ENCODE measurements at regions of chr15 and their contacts with region 1.

Region 1: DNA sequence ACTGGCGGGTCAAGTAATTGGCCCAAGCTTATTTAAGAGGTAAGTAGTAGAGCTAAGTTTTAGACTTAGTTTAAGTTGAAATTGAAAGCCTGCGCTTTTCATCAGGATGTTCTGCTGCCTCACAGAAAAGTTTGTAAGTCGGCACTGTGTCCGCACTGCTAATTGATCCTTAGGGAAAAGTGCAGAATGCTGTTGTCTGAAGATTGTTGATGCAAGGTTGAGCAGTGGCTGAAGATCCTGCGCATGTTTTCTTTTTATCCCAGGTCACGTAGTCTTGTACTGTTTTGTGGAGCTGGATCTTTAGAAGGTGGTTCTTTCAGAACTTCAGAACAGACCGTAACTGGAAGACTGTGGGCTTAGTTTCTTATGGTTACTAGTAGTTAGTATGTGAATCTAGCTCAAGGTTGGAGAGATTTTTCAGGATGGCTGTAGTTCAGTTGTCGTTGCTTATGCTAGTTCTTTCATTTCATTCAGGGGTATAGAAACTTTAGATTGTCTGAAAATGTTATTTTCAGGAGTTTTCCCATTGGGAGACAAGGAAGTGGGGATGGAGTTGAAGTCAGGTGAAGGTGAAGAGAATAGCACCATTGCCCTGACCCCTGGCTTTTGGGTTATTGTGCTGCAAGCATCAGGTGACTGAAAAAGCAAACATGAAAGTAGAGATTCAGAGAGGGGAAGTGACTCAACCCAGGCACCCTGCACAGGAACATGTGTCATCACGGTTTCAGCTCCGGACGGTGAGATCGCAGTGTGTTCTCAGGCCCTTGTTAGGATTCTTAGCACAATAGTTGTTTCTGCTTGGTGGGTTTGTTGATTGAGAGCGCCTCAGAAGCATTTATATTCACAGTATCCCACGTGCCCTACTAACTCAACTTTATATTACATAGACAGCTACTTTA is 32.8 kb downstream of the AKAP13 start:
- DNase-seq: peak; percentile 86
- ATAC-seq: peak; percentile 93
- H3K4me3 ChIP-seq: peak overlapping the region in 1 of 5 experiments; percentile 9
- H3K4me3 Mint-ChIP-seq: peak overlapping the region; percentile 56
- H3K27ac ChIP-seq: peak overlapping the region; percentile 13 to 72
- H3K27ac Mint-ChIP-seq: peak overlapping the region; percentile 90
- H3K4me1 ChIP-seq: peaks cover 56 to 61% of the 10 kb centered on the region in 2 donors
- H3K4me1 Mint-ChIP-seq: peaks cover 67% of the 10 kb centered on the region
- H3K27me3 ChIP-seq: no peaks in the 10 kb centered on the region
- H3K27me3 Mint-ChIP-seq: no peaks in the 10 kb centered on the region
- CTCF ChIP-seq: peak; percentile 18

Region 2: DNA sequence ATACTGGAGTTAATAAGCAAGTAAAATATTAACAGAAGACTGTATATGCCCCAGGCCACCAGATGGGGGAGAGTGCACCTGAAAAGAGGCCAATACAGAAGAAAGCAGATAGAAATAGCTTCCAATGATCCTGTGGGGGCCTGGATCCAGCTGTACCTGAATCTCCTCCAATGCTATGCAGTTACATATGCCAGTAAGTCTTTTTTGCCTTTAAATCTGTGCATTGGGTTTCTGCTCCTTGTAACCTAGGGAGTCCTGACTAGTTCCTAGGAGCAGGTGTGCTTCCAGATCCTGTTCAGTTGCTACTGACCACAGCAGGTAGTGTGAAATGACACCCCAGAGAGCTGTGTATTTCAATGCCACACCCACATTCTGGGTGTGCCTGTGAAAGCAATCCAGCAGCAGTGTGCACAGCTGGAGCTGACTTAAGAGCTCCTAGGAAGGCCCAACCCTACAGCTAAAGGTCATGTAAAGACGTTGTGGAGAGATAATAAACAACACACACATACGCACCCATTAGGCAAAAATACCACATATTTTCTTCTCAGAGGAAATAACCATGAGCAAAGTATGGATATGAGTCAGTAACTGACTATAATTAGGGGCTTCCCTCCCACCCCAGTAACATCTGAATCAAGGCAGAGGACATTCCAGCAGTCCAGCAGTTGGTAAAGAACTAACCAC is 95.0 kb before region 1 on chr15:
- CTCF ChIA-PET with region 1: interaction called, 40 read pairs
- POLR2A ChIA-PET with region 1: interaction called, 6 read pairs
- intact Hi-C with region 1: no loop called
- DNase-seq: peak; percentile 42
- ATAC-seq: peak; percentile 90
- H3K4me3 ChIP-seq: no peak overlapping the region
- H3K4me3 Mint-ChIP-seq: peak overlapping the region; percentile 46
- H3K27ac ChIP-seq: peak overlapping the region; percentile 20 to 29
- H3K27ac Mint-ChIP-seq: peak overlapping the region; percentile 83
- H3K4me1 ChIP-seq: peaks cover 39 to 40% of the 10 kb centered on the region in 2 donors
- H3K4me1 Mint-ChIP-seq: peaks cover 63% of the 10 kb centered on the region
- H3K27me3 ChIP-seq: no peaks in the 10 kb centered on the region
- H3K27me3 Mint-ChIP-seq: no peaks in the 10 kb centered on the region
- CTCF ChIP-seq: peak; percentile 29

Region 3: GRCh38 chr15:85388566-85389305 is 24.5 kb before region 1 on chr15:
- CTCF ChIA-PET with region 1: interaction called, 89 read pairs
- POLR2A ChIA-PET with region 1: interaction called, 3 read pairs
- intact Hi-C with region 1: no loop called
- DNase-seq: no peak
- ATAC-seq: no peak
- H3K4me3 ChIP-seq: peak overlapping the region in 1 of 5 experiments; percentile 13
- H3K4me3 Mint-ChIP-seq: peak overlapping the region; percentile 73
- H3K27ac ChIP-seq: no peak overlapping the region
- H3K27ac Mint-ChIP-seq: no peak overlapping the region
- H3K4me1 ChIP-seq: peaks cover 57 to 66% of the 10 kb centered on the region in 2 donors
- H3K4me1 Mint-ChIP-seq: peaks cover 33% of the 10 kb centered on the region
- H3K27me3 ChIP-seq: no peaks in the 10 kb centered on the region
- H3K27me3 Mint-ChIP-seq: no peaks in the 10 kb centered on the region
- CTCF ChIP-seq: no peak

Region 4: DNA sequence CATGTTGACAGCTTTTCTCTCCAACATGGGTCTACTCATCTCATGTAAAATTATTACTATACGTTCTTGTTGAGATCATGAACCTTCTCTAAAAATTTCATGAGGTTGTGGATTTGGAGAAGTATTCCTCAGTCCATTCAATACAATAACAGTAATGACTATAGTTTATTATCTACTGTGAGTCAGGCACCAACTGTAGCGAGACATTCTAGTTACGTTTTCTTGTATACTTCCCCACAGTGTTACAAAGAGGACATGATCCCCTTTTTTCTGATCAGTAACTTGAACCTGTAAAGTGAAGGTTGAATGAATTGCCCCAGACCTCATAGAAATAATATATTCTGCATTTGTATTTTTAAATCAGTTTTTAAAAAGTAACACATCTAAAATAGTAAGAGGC is 43.6 kb after region 1 on chr15:
- CTCF ChIA-PET with region 1: interaction called, 4 read pairs
- POLR2A ChIA-PET with region 1: no interaction called
- intact Hi-C with region 1: loop called (anchors 5 kb)
- DNase-seq: peak; percentile 59
- ATAC-seq: peak; percentile 46
- H3K4me3 ChIP-seq: peak overlapping the region in 1 of 5 experiments; percentile 28
- H3K4me3 Mint-ChIP-seq: peak overlapping the region; percentile 63
- H3K27ac ChIP-seq: peak overlapping the region; percentile 68 to 86
- H3K27ac Mint-ChIP-seq: peak overlapping the region; percentile 53
- H3K4me1 ChIP-seq: peaks cover 77 to 78% of the 10 kb centered on the region in 2 donors
- H3K4me1 Mint-ChIP-seq: peaks cover 82% of the 10 kb centered on the region
- H3K27me3 ChIP-seq: no peaks in the 10 kb centered on the region
- H3K27me3 Mint-ChIP-seq: no peaks in the 10 kb centered on the region
- CTCF ChIP-seq: no peak

Region 5: DNA sequence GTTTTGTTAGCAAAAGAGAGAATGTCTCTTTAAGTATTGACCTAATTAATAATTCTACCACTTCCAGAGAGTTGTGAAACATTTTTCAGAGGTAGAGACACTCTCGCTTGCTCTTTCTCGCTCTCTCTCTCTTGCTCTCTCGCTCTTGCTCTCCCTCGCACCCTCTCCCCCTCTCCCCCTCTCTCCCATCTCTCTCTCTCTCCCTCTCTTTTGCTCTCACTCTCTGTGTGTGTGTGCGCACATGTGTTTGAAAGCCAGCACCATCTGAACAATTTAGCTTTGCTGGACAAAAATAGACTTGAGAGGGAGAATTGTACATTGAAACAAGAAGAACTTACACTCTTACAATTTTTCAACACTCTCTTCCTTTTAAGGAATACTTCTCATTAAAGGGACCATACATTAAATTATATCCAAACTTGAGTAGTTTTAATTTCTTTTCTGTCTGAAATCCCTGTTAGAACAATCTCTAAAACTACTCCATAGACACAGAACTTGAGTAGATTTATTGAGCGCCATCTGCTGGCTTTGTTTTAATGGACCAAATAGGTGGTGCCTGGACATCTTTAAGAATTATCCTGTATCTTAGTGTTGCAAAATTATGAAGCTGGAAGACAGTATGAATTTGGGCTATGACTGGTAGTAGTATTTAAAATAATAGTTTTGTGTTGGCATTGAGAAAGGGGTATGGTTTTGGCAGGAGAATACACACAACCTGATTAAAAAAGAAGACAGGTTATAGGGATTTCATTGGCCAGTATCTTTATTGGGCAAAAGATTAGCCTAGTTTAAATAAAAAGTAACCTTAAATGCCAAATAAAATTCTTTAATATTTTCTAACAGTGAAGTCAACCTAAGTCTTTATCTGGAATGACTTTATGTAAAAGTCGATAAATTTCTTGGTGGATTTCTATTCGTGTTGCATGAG is 91.8 kb after region 1 on chr15:
- CTCF ChIA-PET with region 1: interaction called, 37 read pairs
- POLR2A ChIA-PET with region 1: no interaction called
- intact Hi-C with region 1: no loop called
- DNase-seq: peak; percentile 71
- ATAC-seq: no peak
- H3K4me3 ChIP-seq: no peak overlapping the region
- H3K4me3 Mint-ChIP-seq: no peak overlapping the region
- H3K27ac ChIP-seq: peak overlapping the region in 1 of 2 donors; percentile 35
- H3K27ac Mint-ChIP-seq: no peak overlapping the region
- H3K4me1 ChIP-seq: peaks cover 13 to 16% of the 10 kb centered on the region in 2 donors
- H3K4me1 Mint-ChIP-seq: peaks cover 48% of the 10 kb centered on the region
- H3K27me3 ChIP-seq: no peaks in the 10 kb centered on the region
- H3K27me3 Mint-ChIP-seq: no peaks in the 10 kb centered on the region
- CTCF ChIP-seq: peak; percentile 74

Region 6: GRCh38 chr15:85527895-85528294 is 114.7 kb after region 1 on chr15:
- CTCF ChIA-PET with region 1: no interaction called
- POLR2A ChIA-PET with region 1: no interaction called
- intact Hi-C with region 1: no loop called
- DNase-seq: no peak
- ATAC-seq: no peak
- H3K4me3 ChIP-seq: no peak overlapping the region
- H3K4me3 Mint-ChIP-seq: peak overlapping the region; percentile 9
- H3K27ac ChIP-seq: peak overlapping the region; percentile 9 to 58
- H3K27ac Mint-ChIP-seq: peak overlapping the region; percentile 67
- H3K4me1 ChIP-seq: peaks cover 48% of the 10 kb centered on the region in 2 donors
- H3K4me1 Mint-ChIP-seq: peaks cover 77% of the 10 kb centered on the region
- H3K27me3 ChIP-seq: no peaks in the 10 kb centered on the region
- H3K27me3 Mint-ChIP-seq: no peaks in the 10 kb centered on the region
- CTCF ChIP-seq: no peak